PC-9 (cell line): ENCODE measurements at regions of chr12 and their contacts with region 1.

Region 1: DNA sequence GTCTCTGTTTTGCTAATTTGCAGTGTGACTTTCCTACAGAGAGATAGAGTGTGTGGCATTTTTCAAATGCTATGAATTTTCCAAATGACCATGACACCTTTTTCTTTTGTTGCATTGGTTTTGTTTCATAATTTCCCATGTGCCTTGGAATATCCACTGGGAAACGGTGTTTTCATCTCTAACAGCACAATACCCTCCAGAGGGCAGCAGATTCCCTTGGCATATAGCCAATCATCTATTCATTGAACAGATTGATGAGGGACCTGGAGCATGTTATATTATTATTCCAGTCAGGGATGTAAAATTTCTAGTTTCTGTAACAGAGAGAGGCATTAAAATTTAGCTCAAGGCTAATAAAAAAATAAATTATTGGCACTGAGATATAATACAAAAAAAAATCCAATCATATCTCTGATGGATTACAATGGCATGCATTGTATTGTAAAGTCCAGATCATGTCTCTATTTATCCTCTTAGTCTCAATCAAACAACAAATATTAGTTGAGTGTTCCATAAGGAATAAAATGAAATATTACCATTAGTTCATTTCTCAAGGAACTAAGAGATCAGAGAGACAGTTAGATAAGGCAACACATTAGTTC is 29.6 kb upstream of the NTN4 start:
- DNase-seq: peak in 1 of 2 experiments; percentile 46
- H3K4me3 ChIP-seq: no peak overlapping the region
- H3K27ac ChIP-seq: no peak overlapping the region
- H3K4me1 ChIP-seq: peaks cover 4% of the 10 kb centered on the region
- H3K27me3 ChIP-seq: no peaks in the 10 kb centered on the region
- CTCF ChIP-seq: peak; percentile 69

Region 2: DNA sequence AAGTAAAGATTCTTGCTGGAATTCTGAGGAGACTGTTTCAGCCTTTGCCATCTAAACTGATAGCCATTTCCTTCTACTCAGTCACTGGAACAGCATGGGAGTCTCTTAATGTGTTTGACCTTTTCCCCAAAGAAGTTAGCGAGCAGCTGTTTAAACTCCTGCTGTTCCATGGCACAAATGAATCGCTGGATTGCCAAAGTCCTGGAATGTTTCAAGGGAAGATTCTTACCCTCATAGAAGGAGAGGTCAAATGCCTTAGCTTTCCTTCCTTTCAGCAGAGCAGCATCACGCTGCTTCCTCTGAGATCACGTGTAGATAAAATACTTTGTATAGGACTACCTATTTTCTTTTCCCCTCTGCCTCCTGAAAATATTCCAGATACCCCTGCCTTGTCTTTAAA is 736.3 kb before region 1 on chr12:
- CTCF ChIA-PET with region 1: no interaction called
- POLR2A ChIA-PET with region 1: no interaction called
- intact Hi-C with region 1: no loop called
- DNase-seq: no peak
- H3K4me3 ChIP-seq: no peak overlapping the region
- H3K27ac ChIP-seq: peak overlapping the region; percentile 1; the same call in 1 of the 2 replicates
- H3K4me1 ChIP-seq: 0 out of 2 replicates have a peak, but pooled peaks cover 6% of the 10 kb centered on the region
- H3K27me3 ChIP-seq: no peaks in the 10 kb centered on the region
- CTCF ChIP-seq: no peak

Region 3: DNA sequence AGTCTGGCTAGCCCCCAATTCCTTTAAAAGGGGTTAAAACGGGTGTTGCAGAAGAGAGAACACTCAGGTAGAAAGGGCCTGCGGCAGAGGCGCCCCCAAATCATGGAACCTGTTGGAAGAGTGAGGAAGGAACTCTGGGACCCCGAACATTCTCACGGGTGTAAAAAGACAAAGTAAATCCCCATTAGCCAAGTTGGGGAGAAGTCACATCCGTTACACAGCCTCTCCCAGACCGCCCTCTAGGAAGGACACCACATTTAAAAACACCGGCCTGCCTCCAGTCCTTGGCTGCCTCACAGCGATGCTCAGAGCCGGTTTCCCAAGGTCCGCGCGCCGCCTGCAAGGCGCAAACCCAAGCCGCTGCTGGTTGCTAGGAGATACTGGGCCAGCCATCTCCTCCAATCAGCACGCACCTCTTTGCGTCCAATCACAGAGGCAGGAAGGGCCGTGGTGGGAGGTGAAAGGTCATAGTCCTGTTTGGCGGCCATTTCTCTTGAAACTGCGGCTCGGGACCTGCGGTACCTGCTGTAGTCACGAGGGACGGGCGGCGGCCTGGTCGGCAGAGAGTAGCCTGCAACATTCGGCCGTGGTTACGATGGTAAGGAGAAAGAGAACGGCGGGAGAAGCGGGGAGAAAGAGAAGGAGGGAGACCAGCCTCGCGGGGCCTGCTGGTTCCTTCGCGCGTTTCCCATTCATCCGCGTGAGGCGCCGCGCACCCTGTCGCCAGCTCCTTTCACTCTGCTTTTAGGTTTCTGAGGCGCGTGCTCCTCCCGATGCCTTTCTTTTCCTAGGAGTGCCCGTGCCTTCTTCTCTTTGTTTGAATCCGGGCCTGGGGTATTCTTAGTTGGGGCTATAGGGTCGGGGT is 38.5 kb after region 1 on chr12 and contains the start of gene SNRPF:
- CTCF ChIA-PET with region 1: no interaction called
- POLR2A ChIA-PET with region 1: no interaction called
- intact Hi-C with region 1: loop called (anchors 2 kb)
- DNase-seq: peak; percentile 93 to 96
- H3K4me3 ChIP-seq: peak within 1 kb of the TSS; percentile 94
- H3K27ac ChIP-seq: peak within 1 kb of the TSS; percentile 77
- H3K4me1 ChIP-seq: peaks cover 16% of the 10 kb centered on the region
- H3K27me3 ChIP-seq: no peaks in the 10 kb centered on the region
- CTCF ChIP-seq: no peak
- total RNA-seq, gene SNRPF: 31.1 and 50.3 TPM in 2 replicates